H1 (cell line): ENCODE measurements at regions of chr12 and their contacts with region 1.

Region 1: DNA sequence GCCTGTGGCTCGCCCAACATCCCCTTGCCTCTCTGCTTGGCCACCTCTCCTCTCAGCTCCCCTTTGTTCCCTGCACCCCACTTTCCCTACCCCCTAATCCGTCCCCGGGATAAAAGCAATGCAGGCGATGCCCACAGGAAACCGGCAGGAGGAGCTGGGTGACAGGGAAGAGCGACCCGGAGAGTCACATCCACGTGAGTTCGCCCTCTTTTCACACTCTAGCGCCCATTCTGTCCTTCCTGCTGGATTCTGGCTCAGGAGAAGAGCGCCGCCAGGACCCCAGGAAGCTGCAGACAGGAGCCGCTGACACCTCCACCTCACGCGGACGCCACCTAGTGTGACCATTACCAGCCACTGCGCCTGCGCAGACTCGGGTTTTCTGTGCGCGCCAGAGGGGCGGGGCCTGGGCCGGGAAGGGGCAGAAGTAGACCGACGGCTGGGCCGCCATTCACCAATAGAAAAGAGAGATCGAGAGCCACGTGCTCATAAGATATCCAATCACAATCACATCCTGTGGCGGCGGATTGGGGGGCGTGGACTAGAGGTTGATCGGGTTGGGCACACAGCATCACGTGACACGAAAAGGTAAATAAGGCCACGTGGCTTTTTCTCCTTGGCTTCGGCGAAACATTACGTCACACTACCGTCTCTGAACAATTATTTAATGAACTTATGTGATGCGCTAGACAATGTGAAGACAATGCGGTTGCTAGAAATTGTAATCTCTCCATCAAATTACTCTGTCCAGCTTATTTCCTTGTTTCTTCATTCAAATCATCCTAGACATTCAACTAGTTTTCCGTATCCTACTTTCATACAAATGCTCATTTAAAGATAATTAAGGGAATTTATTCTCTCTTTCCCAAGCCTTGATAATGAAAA is 10.1 kb downstream of the PLA2G1B start:
- DNase-seq: peak; percentile 97 to 100
- H3K4me3 ChIP-seq: peak overlapping the region; percentile 33 to 67 (median 56)
- H3K27ac ChIP-seq: peak overlapping the region; percentile 68; the same call in 1 of the 2 replicates
- H3K4me1 ChIP-seq: peaks cover 0 to 8% (median 4%) of the 10 kb centered on the region in 4 experiments; a peak in 3 of 7 replicates
- H3K27me3 ChIP-seq: no peaks in the 10 kb centered on the region
- CTCF ChIP-seq: peak; percentile 28 to 63 (median 45)
- EP300 ChIP-seq: no peak
- POLR2A ChIP-seq: peak in 1 of 2 experiments; percentile 78; a peak in 1 of 3 replicates
- RAD21 ChIP-seq: peak; percentile 23; a peak in 2 of 4 replicates

Region 2: DNA sequence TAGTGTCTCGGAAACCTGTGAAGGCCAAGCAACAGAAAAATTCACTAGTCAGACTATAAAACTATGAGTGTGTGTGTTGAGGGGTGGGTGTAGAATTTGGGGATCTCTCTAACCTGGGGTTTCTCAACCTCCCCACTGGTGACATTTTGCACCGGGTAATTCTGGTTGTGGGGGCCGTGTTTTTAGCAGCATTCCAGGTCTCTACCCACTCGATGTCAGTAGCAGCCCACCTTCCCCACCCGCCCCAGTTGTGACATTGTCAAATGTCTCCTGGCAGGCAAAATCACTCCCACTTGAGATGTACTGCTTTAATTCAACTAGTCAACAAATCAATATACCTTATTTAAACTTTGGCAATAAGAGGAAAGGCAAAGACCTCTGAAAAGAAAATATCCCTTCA is 127.1 kb before region 1 on chr12:
- CTCF ChIA-PET with region 1: no interaction called
- POLR2A ChIA-PET with region 1: no interaction called
- DNase-seq: no peak
- H3K4me3 ChIP-seq: no peak overlapping the region
- H3K27ac ChIP-seq: no peak overlapping the region
- H3K4me1 ChIP-seq: peaks cover 0 to 3% (median under 1%) of the 10 kb centered on the region in 4 experiments; a peak in 2 of 7 replicates
- H3K27me3 ChIP-seq: no peaks in the 10 kb centered on the region
- CTCF ChIP-seq: no peak
- EP300 ChIP-seq: no peak
- POLR2A ChIP-seq: no peak
- RAD21 ChIP-seq: no peak

Region 3: DNA sequence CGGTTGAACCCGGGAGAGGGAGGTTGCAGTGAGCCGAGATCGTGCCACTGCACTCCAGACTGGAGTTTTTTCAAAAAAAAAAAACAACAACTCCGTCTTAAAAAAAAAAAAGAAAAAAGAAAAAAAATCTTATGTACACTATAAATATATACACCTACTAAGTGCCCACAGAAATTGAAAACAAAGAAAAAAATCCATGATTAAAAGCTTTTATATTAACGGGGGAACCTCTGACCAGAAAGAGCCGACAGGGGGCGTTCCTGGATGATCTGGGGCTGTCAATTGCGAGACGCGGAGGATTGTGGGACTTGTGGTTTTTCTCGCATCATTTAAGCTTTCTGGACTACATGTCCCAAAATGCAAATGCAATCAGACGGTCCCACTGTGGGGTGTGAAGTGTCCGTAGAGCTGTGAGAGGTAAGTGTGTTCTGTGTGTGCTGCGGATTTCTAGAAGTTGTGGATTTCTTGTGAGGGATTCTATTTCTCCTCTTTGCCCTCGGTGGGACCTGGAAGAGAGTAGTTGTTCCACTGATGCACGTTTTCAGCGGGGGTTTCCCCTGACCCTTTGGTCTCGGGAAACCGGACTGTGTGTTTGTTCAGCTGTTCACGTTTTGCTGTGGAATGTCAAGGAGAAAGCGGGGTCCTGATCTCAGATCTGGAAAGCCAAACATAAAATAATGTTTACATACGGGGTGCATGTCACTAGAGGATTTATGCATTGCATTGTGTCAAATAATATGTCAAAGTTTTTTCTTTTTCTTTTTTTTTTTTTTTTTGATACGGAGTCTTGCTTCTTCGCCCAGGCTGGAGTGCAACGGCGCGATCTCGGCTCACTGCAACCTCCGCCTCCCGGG is 15.3 kb before region 1 on chr12 and contains the start of gene SIRT4:
- CTCF ChIA-PET with region 1: interaction called, 109 read pairs
- POLR2A ChIA-PET with region 1: interaction called, 23 read pairs
- DNase-seq: peak in 1 of 2 experiments; percentile 87
- H3K4me3 ChIP-seq: peak within 1 kb of the TSS; percentile 79 to 98 (median 88)
- H3K27ac ChIP-seq: peak within 1 kb of the TSS; percentile 84
- H3K4me1 ChIP-seq: no peaks in the 10 kb centered on the region
- H3K27me3 ChIP-seq: no peaks in the 10 kb centered on the region
- CTCF ChIP-seq: peak; percentile 68 to 81 (median 69)
- EP300 ChIP-seq: peak in 1 of 2 experiments; percentile 88; a peak in 1 of 3 replicates
- POLR2A ChIP-seq: no peak
- RAD21 ChIP-seq: peak in 1 of 2 experiments; percentile 26; a peak in 1 of 4 replicates
- total RNA-seq, gene SIRT4: 2.3 and 4.1 TPM in 2 replicates